ENCODE measurements at regions of chr17 and their contacts with region 1.

Region 1: GRCh38 chr17:32006957-32007462 is at the start of gene LRRC37B:
- DNase-seq: peak; percentile 74 to 85 (median 80)
- H3K4me3 ChIP-seq: peak within 1 kb of the TSS; percentile 90 to 94 (median 91)
- H3K4me3 Mint-ChIP-seq: peak within 1 kb of the TSS; percentile 94 to 97
- H3K27ac ChIP-seq: peak within 1 kb of the TSS in 1 of 2 donors; percentile 83
- H3K27ac Mint-ChIP-seq: peak within 1 kb of the TSS in 6 of 7 donors; percentile 6 to 89 (median 78)
- H3K4me1 ChIP-seq: peaks cover 28 to 35% of the 10 kb centered on the region in 2 donors
- H3K4me1 Mint-ChIP-seq: peaks cover 41% of the 10 kb centered on the region
- H3K27me3 ChIP-seq: peaks cover 5 to 10% of the 10 kb centered on the region in 2 donors
- H3K27me3 Mint-ChIP-seq: peaks cover 7 to 18% (median 13%) of the 10 kb centered on the region in 3 donors
- CTCF ChIP-seq: peak; percentile 96
- polyA plus RNA-seq, gene LRRC37B: 1.8 to 31.2 (median 2.1) TPM

Region 2: DNA sequence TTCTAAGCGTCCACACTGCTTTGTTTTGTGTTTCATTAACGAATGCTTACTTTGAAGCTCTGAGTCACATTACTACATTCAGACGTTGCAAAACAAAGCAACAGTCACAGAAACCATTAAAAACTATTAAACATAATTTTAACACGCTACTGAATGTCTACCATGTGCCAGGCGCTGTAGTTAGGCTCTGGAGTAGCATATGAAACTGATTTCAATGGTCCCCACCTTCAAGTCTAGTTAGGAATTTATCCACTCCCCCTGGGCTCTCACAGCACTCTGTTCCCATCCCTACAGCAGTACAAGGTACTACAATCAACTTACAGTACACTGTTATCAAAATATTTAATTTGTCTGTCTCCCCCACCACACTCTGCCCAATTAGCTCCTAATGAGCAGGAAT is 106.1 kb before region 1 on chr17:
- intact Hi-C with region 1: no loop called
- DNase-seq: peak; percentile 12 to 43 (median 36)
- H3K4me3 ChIP-seq: peak overlapping the region; percentile 85 to 95 (median 92)
- H3K4me3 Mint-ChIP-seq: no peak overlapping the region
- H3K27ac ChIP-seq: peak overlapping the region in 1 of 2 donors; percentile 85
- H3K27ac Mint-ChIP-seq: no peak overlapping the region
- H3K4me1 ChIP-seq: peaks cover 12% of the 10 kb centered on the region in 2 donors
- H3K4me1 Mint-ChIP-seq: peaks cover 3% of the 10 kb centered on the region
- H3K27me3 ChIP-seq: no peaks in the 10 kb centered on the region
- H3K27me3 Mint-ChIP-seq: peaks cover 0 to 4% (median 0%) of the 10 kb centered on the region in 3 donors
- CTCF ChIP-seq: no peak

Region 3: DNA sequence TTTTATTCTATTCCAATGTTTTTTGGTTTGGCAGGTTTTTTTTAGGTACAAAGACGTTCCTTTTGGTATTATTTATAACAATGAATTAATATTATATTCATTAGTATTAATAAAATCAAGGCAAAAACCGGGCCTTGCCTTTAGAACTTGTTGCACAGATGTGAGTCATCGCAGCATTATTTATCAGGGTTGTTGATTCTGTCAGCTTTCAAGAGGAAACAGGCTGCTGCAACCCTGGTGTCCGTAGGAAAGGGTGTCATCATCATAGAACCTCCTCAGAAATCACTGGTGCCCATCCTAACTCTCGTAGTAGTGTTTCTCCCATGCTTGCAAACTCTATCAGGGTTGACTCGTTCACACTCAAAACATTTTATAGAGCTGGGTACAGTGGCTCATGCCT is 10.0 kb before region 1 on chr17:
- intact Hi-C with region 1: no loop called
- DNase-seq: no peak
- H3K4me3 ChIP-seq: no peak overlapping the region
- H3K4me3 Mint-ChIP-seq: no peak overlapping the region
- H3K27ac ChIP-seq: no peak overlapping the region
- H3K27ac Mint-ChIP-seq: no peak overlapping the region
- H3K4me1 ChIP-seq: no peaks in the 10 kb centered on the region
- H3K4me1 Mint-ChIP-seq: no peaks in the 10 kb centered on the region
- H3K27me3 ChIP-seq: no peaks in the 10 kb centered on the region
- H3K27me3 Mint-ChIP-seq: no peaks in the 10 kb centered on the region
- CTCF ChIP-seq: no peak

Region 4: DNA sequence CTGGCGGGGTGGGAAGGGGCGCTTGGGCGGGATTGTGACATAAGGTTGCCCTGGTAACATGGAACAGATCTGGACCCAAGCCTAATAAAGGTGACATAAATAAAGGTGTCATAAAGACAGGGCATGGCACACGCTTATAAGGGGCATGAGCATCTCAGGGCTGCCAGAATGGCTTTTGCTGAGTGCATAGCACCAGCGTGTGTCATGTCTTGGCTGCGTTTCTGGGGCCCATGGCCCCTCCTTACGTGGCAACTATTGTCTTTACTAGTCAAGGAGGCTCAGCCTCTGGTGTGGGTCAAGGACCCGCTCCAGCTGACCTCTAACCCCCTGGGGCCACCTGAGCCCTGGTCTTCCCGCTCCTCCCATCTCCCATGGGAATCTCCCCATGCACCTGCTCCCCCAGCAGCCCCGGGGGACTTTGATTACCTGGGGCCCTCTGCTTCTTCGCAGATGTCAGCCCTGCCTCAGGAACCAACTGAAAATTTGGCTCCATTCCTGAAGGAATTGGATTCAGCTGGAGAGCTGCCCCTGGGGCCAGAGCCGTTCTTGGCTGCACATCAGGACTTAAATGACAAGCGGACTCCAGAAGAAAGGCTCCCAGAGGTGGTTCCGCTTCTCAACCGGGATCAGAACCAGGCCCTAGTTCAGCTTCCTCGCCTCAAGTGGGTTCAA is 14.1 kb after region 1 on chr17:
- intact Hi-C with region 1: no loop called
- DNase-seq: no peak
- H3K4me3 ChIP-seq: no peak overlapping the region
- H3K4me3 Mint-ChIP-seq: no peak overlapping the region
- H3K27ac ChIP-seq: no peak overlapping the region
- H3K27ac Mint-ChIP-seq: peak overlapping the region in 1 of 7 donors; percentile 6
- H3K4me1 ChIP-seq: peaks cover 9 to 11% of the 10 kb centered on the region in 2 donors
- H3K4me1 Mint-ChIP-seq: peaks cover 12% of the 10 kb centered on the region
- H3K27me3 ChIP-seq: no peaks in the 10 kb centered on the region
- H3K27me3 Mint-ChIP-seq: peaks cover 0 to 2% (median 1%) of the 10 kb centered on the region in 3 donors
- CTCF ChIP-seq: no peak

Region 5: DNA sequence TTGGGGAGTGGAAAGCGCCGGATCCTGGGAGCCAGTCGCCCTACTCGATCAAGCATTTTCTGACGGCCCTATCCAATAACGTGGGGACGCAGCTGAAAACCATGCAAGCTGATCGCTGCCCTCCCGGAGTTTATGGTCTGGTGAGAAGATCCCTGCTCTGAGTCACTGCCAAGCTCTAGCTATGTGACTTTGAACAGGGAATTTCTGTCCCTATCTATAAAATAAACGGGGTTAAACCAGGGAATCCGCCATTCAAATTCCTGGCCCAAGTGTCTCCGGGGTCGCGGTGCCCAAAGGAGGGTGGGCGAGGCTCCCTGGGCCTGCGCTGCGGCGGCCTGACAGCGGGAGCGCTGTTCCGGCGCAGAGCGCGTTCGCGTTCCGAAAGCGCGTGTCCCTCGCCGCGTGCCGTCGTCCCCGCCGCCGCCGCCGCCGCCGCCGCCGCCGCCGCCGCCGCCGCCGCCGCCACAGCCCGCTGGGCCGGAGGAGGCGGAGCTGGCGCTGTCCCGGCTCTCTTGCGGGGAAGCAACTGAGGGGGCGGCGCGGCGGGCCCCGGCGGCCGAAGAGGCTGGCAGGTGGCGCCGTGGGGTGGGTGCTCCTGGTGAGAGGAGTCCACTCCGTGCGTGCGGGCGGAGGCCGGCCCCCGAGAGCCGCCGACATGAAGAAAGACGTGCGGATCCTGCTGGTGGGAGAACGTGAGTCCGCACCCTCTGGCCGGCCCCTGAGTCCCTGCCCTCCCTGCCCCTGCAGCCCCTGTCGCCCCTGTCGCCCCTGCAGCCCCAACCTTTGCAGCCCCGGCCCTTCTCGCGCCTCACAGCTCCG is 135.2 kb after region 1 on chr17 and contains the start of gene RHOT1:
- intact Hi-C with region 1: loop called in 1 of 2 experiments (anchors 5 kb)
- DNase-seq: peak; percentile 63 to 85 (median 67)
- H3K4me3 ChIP-seq: peak within 1 kb of the TSS; percentile 64 to 100 (median 66)
- H3K4me3 Mint-ChIP-seq: peak within 1 kb of the TSS; percentile 99 to 100
- H3K27ac ChIP-seq: peak within 1 kb of the TSS; percentile 91 to 93
- H3K27ac Mint-ChIP-seq: peak within 1 kb of the TSS; percentile 93 to 97 (median 95)
- H3K4me1 ChIP-seq: peaks cover 33 to 49% of the 10 kb centered on the region in 2 donors
- H3K4me1 Mint-ChIP-seq: peaks cover 51% of the 10 kb centered on the region
- H3K27me3 ChIP-seq: no peaks in the 10 kb centered on the region
- H3K27me3 Mint-ChIP-seq: peaks cover 0 to 1% (median 0%) of the 10 kb centered on the region in 3 donors
- CTCF ChIP-seq: peak; percentile 40
- polyA plus RNA-seq, gene RHOT1: 45.9 to 60.5 (median 51.9) TPM